Left ventricle myocardium inferior (tissue), 1 donor: ENCODE measurements at regions of chrX and their contacts with region 1.

Region 1: GRCh38 chrX:47030339-47030738 is 47.9 kb upstream of the RGN start:
- DNase-seq: no peak
- H3K4me3 ChIP-seq: no peak overlapping the region
- H3K27ac ChIP-seq: no peak overlapping the region
- H3K4me1 ChIP-seq: no peaks in the 10 kb centered on the region
- H3K27me3 ChIP-seq: no peaks in the 10 kb centered on the region
- CTCF ChIP-seq: peak; percentile 64

Region 2: GRCh38 chrX:46903458-46904242 is 126.7 kb before region 1 on chrX:
- intact Hi-C with region 1: loop called (anchors 10 kb)
- DNase-seq: peak; percentile 76
- H3K4me3 ChIP-seq: peak overlapping the region; percentile 64
- H3K27ac ChIP-seq: peak overlapping the region; percentile 27
- H3K4me1 ChIP-seq: no peaks in the 10 kb centered on the region
- H3K27me3 ChIP-seq: no peaks in the 10 kb centered on the region
- CTCF ChIP-seq: peak; percentile 72

Region 3: GRCh38 chrX:46967547-46967946 is 62.8 kb before region 1 on chrX:
- intact Hi-C with region 1: no loop called
- DNase-seq: no peak
- H3K4me3 ChIP-seq: no peak overlapping the region
- H3K27ac ChIP-seq: no peak overlapping the region
- H3K4me1 ChIP-seq: peaks cover 5% of the 10 kb centered on the region
- H3K27me3 ChIP-seq: no peaks in the 10 kb centered on the region
- CTCF ChIP-seq: no peak